Head of caudate nucleus (tissue), 42 donors: ENCODE measurements at regions of chr1 and their contacts with region 1.

Region 1: DNA sequence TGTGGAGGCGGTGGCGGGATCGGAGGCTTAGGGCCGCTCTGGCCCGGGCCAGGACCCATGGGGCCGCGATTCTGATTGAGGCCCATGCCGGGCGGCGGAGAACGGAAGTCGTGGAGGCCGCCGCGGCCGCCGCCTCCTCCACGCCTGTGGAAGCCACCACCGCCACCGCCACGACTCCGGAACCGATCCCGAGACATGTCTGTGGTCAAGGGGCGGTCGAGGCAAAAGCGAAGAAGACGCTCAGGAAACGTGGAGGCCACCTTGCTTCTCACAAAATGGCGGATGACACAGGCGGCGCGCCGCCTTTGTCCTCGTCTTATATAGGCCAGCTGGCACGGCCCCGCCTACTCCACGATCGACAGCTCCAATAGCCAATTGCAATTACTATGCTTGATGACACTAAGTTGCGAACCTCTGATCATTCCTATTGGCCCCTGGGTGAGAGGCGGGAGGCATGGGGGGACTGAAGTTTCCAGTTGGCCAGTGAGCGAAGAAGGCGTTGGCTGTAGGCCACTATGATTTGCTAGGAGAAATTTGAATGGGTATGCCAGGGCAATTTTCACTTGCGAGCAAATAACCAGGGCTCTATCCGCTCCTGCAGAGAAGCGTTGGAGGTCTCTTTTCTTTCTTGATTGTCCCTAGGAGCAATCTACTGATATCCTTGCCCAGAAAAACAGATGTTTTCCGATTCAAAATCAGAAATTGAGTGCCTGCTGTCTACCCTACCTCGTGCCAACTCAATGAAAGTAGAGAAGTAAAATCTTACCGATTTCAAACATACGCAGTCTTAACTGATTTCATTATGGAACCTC is at the start of gene SFPQ:
- DNase-seq: peak; percentile 93 to 99 (median 98)

Region 2: DNA sequence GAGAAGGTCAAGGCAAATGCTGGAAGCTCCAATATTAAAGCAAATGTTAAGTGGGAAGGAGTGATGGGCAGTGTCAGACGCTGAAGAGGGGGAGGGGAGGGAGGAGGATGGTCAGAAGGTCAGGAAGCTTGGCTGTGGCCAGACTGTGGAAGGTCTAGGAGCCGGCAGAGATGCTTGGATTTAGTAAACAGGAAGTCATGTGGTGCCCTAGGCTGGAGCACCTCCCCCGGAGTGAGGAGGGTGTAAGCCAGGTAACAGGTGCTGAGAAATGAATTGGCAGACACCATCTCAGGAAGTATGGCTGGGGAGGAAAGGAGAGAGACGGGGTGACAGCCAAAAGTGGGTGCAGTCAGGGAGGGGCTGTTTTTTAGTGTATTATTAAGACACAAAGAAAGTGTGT is 1045.8 kb before region 1 on chr1:
- intact Hi-C with region 1: no loop called
- DNase-seq: no peak

Region 3: DNA sequence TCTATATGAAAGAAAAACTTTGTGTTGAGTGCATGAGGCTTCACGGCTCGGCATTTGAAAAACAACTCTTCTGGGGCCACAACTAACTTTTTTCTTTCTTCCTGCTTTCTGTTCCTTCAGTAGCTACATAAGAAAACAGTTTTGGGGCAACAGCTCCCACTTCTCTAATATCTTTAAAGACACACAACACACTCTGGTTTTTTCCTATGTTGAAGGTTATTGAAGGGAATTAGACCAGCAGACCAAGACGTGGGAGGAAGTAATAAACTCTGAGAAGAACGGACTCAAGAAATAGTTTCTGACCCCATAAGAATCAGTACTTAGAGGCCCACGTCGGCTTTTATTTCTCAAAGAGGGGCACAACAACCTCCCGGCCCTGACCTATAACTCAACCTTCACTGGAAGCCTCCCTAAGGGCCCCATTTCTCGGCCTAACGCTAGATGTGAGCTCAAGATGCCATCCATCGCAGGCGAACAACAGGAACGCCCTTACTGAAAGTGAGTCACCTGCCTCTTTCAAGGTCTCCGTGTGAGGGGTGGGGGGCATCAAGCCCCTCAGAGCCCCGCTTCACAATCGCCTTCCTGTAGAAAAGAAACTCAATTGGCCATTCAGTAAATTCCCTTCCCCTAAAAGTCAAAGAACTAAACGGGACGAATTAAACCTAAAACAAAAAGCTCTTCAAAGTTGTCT is 162.2 kb before region 1 on chr1:
- intact Hi-C with region 1: loop called (anchors 10 kb)
- DNase-seq: peak in 26 of 42 donors; percentile 5 to 46 (median 18)

Region 4: DNA sequence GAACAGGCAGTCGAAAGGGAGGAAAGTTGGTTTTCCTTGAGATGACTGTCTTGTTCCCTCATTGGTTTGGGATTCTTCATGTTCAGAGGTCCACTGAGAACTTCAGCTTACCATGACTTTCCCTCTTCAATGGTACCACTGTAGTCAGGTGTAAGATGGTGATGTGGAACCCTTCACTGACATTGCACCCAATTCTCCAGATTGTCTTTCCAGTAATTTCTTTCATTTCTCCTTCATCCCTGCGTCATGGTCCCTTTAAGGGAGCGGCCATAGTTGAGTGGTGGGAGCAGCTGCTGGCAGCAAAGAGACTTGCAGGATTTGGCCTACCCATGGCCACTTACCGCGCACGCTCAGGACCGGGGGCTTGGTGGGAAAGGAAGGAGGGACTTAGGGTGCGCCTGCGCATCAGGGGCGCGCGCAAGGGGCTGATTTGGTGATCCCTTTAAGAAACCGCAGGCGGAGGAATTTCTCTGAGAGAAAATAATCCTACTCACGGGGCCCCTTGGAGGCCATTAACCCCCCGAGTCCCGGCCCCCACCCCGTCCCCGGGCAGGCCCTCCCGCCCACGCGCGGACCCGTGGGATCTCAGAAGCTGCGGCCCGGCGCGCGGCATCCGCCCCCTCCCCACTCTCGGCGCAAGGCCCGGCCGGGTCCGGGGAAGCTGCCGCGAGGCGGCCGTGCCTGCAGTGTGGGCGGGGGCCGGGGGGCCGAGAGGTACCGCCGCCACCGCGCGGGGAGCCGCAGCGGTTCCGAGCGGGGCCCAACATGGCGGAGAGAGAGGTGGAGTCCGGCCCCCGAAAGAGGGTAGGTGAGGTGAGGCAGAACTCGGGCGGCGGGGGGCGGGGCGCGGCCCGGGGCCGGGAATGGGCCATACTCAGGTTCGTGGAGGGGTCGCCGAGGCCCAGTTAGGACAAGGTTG is 75.5 kb after region 1 on chr1 and contains the start of gene ZMYM4:
- intact Hi-C with region 1: loop called (anchors 10 kb)
- DNase-seq: peak; percentile 82 to 96 (median 90)

Region 5: GRCh38 chr1:35557292-35558063 is 364.4 kb after region 1 on chr1 and contains the starts of genes KIAA0319L and NCDN:
- intact Hi-C with region 1: loop called (anchors 5 kb)
- DNase-seq: peak; percentile 92 to 99 (median 96)